ENCODE measurements at regions of chr13 and their contacts with region 1.

Region 1: GRCh38 chr13:38872693-38873092 is 117.9 kb downstream of the STOML3 start:
- DNase-seq: peak; percentile 20 to 76 (median 48)
- H3K4me3 ChIP-seq: peak overlapping the region in 2 of 59 donors; percentile 3 to 25
- H3K27ac ChIP-seq: no peak overlapping the region
- H3K27me3 ChIP-seq: no peaks in the 10 kb centered on the region
- CTCF ChIP-seq: peak in 55 of 56 donors; percentile 25 to 80 (median 59)

Region 2: DNA sequence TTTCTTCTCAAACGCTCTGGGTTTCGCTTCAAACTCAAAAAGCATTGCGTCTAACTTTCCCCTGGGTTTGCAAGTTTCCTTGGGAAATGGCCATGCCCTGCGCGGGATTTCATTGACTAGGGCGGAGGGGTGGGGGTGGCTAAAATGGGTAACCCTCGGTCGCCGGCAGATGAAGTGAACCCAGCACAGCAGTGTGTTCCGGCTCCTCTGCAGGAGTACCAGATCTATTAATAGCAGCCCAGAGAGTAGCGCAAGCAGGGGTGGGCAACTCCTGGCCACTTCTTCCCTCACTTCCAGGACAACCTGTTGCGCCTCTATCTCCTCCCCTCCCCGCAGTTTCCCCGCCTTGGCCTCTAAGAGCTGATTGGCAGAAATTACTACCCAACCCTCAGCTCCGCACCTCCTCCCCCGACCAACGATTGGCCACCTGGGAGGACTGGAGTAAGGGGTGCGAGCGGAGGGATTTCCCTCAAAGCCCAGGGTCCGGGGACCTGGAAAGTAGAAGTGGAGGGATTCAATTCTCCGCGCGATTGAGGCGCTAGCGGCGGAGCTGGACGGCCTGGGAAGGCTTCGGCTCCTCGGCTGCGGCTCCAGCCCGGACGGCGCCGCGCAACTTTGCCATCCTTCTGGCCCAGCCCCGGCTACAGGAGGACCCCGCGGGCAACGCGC is 186.0 kb before region 1 on chr13 and contains the start of gene FREM2:
- intact Hi-C with region 1: loop called (anchors 2 to 5 kb)
- DNase-seq: peak in 6 of 10 donors; percentile 41 to 66 (median 47)
- H3K4me3 ChIP-seq: peak within 1 kb of the TSS; percentile 36 to 82 (median 62)
- H3K27ac ChIP-seq: peak within 1 kb of the TSS in 10 of 59 donors; percentile 4 to 59 (median 26)
- H3K27me3 ChIP-seq: peaks cover 0 to 54% (median 27%) of the 10 kb centered on the region in 45 donors
- CTCF ChIP-seq: no peak
- total RNA-seq, gene FREM2: 0.56 to 8.2 (median 3.0) TPM

Region 3: GRCh38 chr13:38824342-38824741 is 48.4 kb before region 1 on chr13:
- intact Hi-C with region 1: loop called in 1 of 2 experiments (anchors 5 kb)
- DNase-seq: no peak
- H3K4me3 ChIP-seq: no peak overlapping the region
- H3K27ac ChIP-seq: no peak overlapping the region
- H3K27me3 ChIP-seq: no peaks in the 10 kb centered on the region
- CTCF ChIP-seq: no peak